PC-9 (cell line): ENCODE measurements at regions of chr6 and their contacts with region 1.

Region 1: GRCh38 chr6:42043787-42044475 is 6.4 kb upstream of the TAF8 start:
- DNase-seq: peak; percentile 68 to 89
- H3K4me3 ChIP-seq: no peak overlapping the region
- H3K27ac ChIP-seq: no peak overlapping the region
- H3K4me1 ChIP-seq: peaks cover 41% of the 10 kb centered on the region
- H3K27me3 ChIP-seq: no peaks in the 10 kb centered on the region
- CTCF ChIP-seq: peak; percentile 96

Region 2: DNA sequence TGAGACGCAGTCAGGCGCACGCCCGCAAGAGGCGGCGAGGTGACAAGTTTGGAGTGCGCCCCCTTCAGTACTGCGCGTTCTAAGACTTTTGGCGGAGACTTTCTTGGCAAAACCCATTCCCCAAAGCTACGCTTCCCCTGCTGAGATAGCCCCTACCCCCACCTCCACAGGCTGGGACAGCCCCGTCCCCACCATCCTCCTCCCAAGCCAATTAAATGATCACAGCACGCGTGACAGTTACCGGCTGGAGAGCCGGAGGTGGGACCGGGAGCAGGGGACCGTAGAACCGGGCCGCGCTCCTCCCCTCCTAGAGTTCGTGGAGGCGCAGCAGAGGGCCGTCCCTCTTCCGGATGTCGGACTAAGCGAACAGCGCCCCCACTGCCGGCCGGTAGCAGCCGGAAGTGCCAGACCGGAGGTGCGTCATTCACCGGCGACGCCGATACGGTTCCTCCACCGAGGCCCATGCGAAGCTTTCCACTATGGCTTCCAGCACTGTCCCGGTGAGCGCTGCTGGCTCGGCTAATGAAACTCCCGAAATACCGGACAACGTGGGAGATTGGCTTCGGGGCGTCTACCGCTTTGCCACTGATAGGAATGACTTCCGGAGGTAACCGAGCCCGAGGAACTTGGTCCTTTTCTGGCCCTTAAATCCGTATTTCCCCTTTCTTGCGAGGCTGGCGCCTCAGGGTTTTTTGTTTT is 256.6 kb before region 1 on chr6 and contains the start of gene TOMM6:
- CTCF ChIA-PET with region 1: interaction called, 8 read pairs
- POLR2A ChIA-PET with region 1: interaction called, 10 read pairs
- intact Hi-C with region 1: no loop called
- DNase-seq: peak; percentile 83 to 92
- H3K4me3 ChIP-seq: peak within 1 kb of the TSS; percentile 100
- H3K27ac ChIP-seq: peak within 1 kb of the TSS; percentile 91
- H3K4me1 ChIP-seq: peaks cover 42% of the 10 kb centered on the region
- H3K27me3 ChIP-seq: no peaks in the 10 kb centered on the region
- CTCF ChIP-seq: peak; percentile 88
- total RNA-seq, gene TOMM6: 143 and 170 TPM in 2 replicates

Region 3: DNA sequence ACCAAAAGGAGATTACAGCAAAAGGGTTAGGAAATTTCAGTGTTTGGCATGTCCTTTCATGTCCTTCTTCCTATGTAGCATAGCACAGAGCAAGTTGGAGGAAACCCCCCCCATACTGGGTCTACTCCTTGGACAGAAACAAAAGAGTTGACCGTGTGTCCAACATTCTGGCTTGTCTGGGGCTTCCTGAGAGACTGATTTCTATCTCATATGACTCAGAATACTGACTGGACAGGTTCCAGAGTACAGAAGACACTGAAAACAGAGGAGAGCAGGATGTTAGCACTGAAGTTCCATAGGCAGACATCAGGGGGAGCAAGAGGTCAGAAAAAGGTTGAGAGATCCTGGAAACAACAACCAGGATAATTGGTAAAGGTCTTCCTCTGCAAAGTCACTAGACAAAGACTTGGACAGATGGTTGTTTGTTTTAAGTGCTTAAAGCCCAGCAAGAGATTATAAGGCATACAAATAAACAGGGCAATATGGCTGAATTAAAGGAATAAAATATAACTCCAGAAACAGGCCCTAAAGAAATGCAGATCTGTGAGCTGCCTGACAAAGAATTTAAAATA is 197.2 kb before region 1 on chr6:
- CTCF ChIA-PET with region 1: no interaction called
- POLR2A ChIA-PET with region 1: no interaction called
- intact Hi-C with region 1: loop called (anchors 1 kb)
- DNase-seq: peak; percentile 79 to 93
- H3K4me3 ChIP-seq: no peak overlapping the region
- H3K27ac ChIP-seq: peak overlapping the region; percentile 56
- H3K4me1 ChIP-seq: peaks cover 9% of the 10 kb centered on the region
- H3K27me3 ChIP-seq: no peaks in the 10 kb centered on the region
- CTCF ChIP-seq: peak; percentile 85

Region 4: GRCh38 chr6:41936073-41936837 is 107.7 kb before region 1 on chr6:
- CTCF ChIA-PET with region 1: interaction called, 4 read pairs
- POLR2A ChIA-PET with region 1: interaction called, 3 read pairs
- intact Hi-C with region 1: loop called (anchors 1 kb)
- DNase-seq: peak; percentile 72
- H3K4me3 ChIP-seq: no peak overlapping the region
- H3K27ac ChIP-seq: peak overlapping the region; percentile 41
- H3K4me1 ChIP-seq: peaks cover 19% of the 10 kb centered on the region; the same call in 1 of the 2 replicates
- H3K27me3 ChIP-seq: no peaks in the 10 kb centered on the region
- CTCF ChIP-seq: peak; percentile 91

Region 5: GRCh38 chr6:41966961-41967311 is 77.0 kb before region 1 on chr6:
- CTCF ChIA-PET with region 1: interaction called, 8 read pairs
- POLR2A ChIA-PET with region 1: no interaction called
- intact Hi-C with region 1: loop called (anchors 2 kb)
- DNase-seq: peak; percentile 74 to 88
- H3K4me3 ChIP-seq: no peak overlapping the region; the same call in 1 of the 2 replicates
- H3K27ac ChIP-seq: peak overlapping the region; percentile 98
- H3K4me1 ChIP-seq: peaks cover 44% of the 10 kb centered on the region
- H3K27me3 ChIP-seq: no peaks in the 10 kb centered on the region
- CTCF ChIP-seq: no peak

Region 6: GRCh38 chr6:42152024-42152423 is 108.1 kb after region 1 on chr6:
- CTCF ChIA-PET with region 1: no interaction called
- POLR2A ChIA-PET with region 1: no interaction called
- intact Hi-C with region 1: no loop called
- DNase-seq: no peak
- H3K4me3 ChIP-seq: no peak overlapping the region
- H3K27ac ChIP-seq: no peak overlapping the region
- H3K4me1 ChIP-seq: peaks cover 13% of the 10 kb centered on the region
- H3K27me3 ChIP-seq: no peaks in the 10 kb centered on the region
- CTCF ChIP-seq: no peak

Region 7: GRCh38 chr6:42879372-42880239 is 835.7 kb after region 1 on chr6 and contains the start of gene RPL7L1:
- CTCF ChIA-PET with region 1: no interaction called
- POLR2A ChIA-PET with region 1: no interaction called
- intact Hi-C with region 1: no loop called
- DNase-seq: peak; percentile 74 to 84
- H3K4me3 ChIP-seq: peak within 1 kb of the TSS; percentile 96
- H3K27ac ChIP-seq: peak within 1 kb of the TSS; percentile 91
- H3K4me1 ChIP-seq: peaks cover 10% of the 10 kb centered on the region
- H3K27me3 ChIP-seq: no peaks in the 10 kb centered on the region
- CTCF ChIP-seq: 0 out of 2 replicates have a peak, but pooled peaks have one; percentile 14
- total RNA-seq, gene RPL7L1: 84.1 and 87.1 TPM in 2 replicates